CD8-positive, alpha-beta memory T cell (primary cell): ENCODE measurements at regions of chr18 and their contacts with region 1.

Region 1: DNA sequence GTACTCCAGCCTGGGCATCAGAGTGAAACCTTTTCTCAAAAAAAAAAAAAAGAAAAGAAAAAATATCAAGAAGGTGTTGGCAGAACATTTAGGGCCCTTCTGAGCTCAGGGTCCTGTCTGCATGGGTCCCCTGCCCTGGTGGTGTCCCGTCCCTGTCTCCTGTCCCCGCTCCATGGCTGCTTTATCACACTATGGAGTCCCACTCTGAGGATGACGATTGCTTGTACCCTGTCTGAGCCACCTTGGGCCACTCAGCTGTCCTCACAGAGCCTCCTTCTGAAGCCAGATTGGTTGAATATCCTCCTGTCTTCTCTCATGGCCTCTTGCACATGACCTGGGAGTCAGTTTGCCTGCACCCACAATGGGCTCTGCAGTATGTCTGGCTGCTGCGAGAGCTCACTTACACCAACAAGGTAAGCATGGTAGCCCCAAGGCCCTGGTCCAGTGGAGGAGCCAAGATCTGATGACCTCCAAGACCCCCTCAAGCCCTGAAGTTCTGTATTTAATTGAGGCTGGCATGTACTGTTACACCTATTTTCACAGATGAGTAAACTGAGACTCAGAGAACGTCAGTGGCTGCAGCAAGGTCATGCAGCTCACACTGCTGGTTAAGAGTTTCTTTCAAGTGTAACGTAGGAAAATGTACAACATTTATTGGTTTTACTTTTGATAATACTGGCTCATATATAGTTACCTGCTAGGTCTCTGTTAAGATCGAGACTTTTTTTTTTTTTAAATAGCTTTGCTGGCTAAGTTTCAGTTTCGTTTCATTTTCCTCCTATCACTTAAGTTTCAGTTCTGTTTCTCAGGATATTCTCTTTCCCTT is 16.9 kb upstream of the ZCCHC2 start:
- DNase-seq: peak in 2 of 5 donors; percentile 33 to 34
- H3K4me3 ChIP-seq: peak overlapping the region; percentile 68
- H3K4me3 Mint-ChIP-seq: peak overlapping the region; percentile 87 to 94 (median 90)
- H3K27ac ChIP-seq: peak overlapping the region; percentile 25
- H3K27ac Mint-ChIP-seq: peak overlapping the region; percentile 92 to 97 (median 96)
- H3K4me1 ChIP-seq: peaks cover 16% of the 10 kb centered on the region
- H3K4me1 Mint-ChIP-seq: peaks cover 12 to 22% (median 21%) of the 10 kb centered on the region in 3 donors
- H3K27me3 ChIP-seq: no peaks in the 10 kb centered on the region
- H3K27me3 Mint-ChIP-seq: no peaks in the 10 kb centered on the region

Region 2: GRCh38 chr18:61898640-61899101 is 607.2 kb before region 1 on chr18:
- CTCF ChIA-PET with region 1: no interaction called
- POLR2A ChIA-PET with region 1: interaction called, 15 read pairs
- DNase-seq: no peak
- H3K4me3 ChIP-seq: no peak overlapping the region
- H3K4me3 Mint-ChIP-seq: no peak overlapping the region
- H3K27ac ChIP-seq: no peak overlapping the region
- H3K27ac Mint-ChIP-seq: no peak overlapping the region
- H3K4me1 ChIP-seq: peaks cover 7% of the 10 kb centered on the region
- H3K4me1 Mint-ChIP-seq: peaks cover 4 to 5% (median 4%) of the 10 kb centered on the region in 3 donors
- H3K27me3 ChIP-seq: no peaks in the 10 kb centered on the region
- H3K27me3 Mint-ChIP-seq: peaks cover 26 to 44% of the 10 kb centered on the region in 2 donors

Region 3: DNA sequence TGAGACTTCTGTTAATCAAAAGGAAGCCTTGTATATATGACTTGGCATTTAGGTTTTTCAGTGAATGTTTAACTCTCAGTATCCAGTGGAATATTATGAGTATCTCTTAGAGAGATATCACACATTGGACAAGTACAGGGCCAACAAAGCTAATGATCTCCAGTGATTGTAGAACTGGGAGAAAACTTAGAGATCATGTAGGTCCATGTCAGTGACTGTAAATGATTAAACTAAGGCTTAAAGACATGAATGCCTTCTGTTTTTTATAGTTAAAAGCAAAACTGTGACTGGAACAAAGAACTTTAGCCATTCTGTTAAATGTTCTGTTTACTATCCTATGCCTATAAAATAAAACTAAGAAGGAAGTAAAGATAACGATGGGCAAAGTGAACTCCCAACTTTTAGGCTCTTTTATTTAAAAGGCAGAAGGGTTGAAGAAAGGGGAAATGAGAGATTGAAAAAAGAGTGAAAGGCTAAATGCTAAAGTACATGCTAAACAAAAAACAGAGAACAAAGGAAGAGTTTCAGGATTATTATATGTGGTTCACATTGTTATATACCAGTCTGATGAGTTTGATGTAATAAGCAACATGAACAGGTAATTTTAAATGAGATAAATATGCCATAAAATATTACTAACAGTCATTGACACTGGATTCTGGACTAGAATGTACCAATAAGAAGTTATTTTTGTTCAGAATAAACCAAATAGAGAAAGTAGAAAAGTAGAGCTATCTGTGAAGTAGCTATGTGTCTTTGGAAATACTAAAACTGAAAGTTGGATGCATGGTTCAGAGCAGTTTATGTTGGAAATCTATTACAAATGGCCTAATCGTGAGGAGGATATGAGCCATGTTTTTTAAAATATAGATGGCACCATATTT is 217.9 kb before region 1 on chr18:
- CTCF ChIA-PET with region 1: no interaction called
- POLR2A ChIA-PET with region 1: no interaction called
- DNase-seq: no peak
- H3K4me3 ChIP-seq: no peak overlapping the region
- H3K4me3 Mint-ChIP-seq: no peak overlapping the region
- H3K27ac ChIP-seq: no peak overlapping the region
- H3K27ac Mint-ChIP-seq: peak overlapping the region in 1 of 8 donors; percentile 80
- H3K4me1 ChIP-seq: no peaks in the 10 kb centered on the region
- H3K4me1 Mint-ChIP-seq: peaks cover 0 to 7% (median 0%) of the 10 kb centered on the region in 3 donors
- H3K27me3 ChIP-seq: no peaks in the 10 kb centered on the region
- H3K27me3 Mint-ChIP-seq: no peaks in the 10 kb centered on the region

Region 4: GRCh38 chr18:62312851-62313250 is 193.0 kb before region 1 on chr18:
- CTCF ChIA-PET with region 1: no interaction called
- POLR2A ChIA-PET with region 1: no interaction called
- DNase-seq: no peak
- H3K4me3 ChIP-seq: no peak overlapping the region
- H3K4me3 Mint-ChIP-seq: no peak overlapping the region
- H3K27ac ChIP-seq: no peak overlapping the region
- H3K27ac Mint-ChIP-seq: no peak overlapping the region
- H3K4me1 ChIP-seq: no peaks in the 10 kb centered on the region
- H3K4me1 Mint-ChIP-seq: no peaks in the 10 kb centered on the region
- H3K27me3 ChIP-seq: no peaks in the 10 kb centered on the region
- H3K27me3 Mint-ChIP-seq: no peaks in the 10 kb centered on the region

Region 5: GRCh38 chr18:62460851-62461300 is 45.0 kb before region 1 on chr18:
- CTCF ChIA-PET with region 1: no interaction called
- POLR2A ChIA-PET with region 1: no interaction called
- DNase-seq: no peak
- H3K4me3 ChIP-seq: no peak overlapping the region
- H3K4me3 Mint-ChIP-seq: no peak overlapping the region
- H3K27ac ChIP-seq: no peak overlapping the region
- H3K27ac Mint-ChIP-seq: no peak overlapping the region
- H3K4me1 ChIP-seq: no peaks in the 10 kb centered on the region
- H3K4me1 Mint-ChIP-seq: no peaks in the 10 kb centered on the region
- H3K27me3 ChIP-seq: no peaks in the 10 kb centered on the region
- H3K27me3 Mint-ChIP-seq: peaks cover under 1 to 3% of the 10 kb centered on the region in 2 donors